ENCODE measurements at regions of chr2 and their contacts with region 1.

Region 1: DNA sequence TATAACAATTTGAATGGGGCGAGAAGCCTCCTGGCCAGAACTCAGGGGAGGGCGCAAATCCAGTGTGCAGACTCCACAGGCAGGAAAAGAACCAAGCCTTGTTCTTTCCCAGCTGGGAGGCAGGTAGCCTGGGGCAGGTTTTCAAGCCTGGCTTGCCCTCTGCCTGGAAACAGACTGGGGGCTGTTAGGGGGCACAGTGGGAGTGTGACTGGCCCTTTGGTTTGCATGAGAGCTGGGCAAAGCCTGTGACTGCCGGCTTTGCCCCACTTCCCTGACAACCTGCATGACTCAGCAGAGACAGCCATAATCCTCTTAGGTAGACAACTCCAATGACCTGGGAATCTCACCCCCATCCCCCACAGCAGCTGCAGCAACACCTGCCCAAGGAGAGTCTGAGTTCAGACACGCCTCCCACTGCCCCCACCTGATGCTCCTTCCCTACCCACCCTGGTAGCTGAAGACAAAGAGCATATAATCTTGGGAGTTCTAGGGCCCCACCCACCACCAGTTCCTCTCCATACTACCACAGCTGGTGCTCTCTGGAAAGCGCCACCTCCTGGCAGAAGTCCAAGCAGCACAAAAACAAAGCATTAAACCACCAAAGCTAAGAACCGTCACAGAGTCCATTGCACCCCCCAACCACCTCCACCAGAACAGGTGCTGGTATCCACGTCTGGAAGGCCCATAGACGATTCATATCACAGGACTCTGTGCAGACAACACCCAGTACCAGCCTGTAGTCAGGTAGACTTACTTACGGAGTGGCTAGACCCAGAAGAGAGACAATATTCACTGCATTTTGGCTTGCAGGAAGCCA is 402.5 kb downstream of the STK39 start:
- DNase-seq: no peak
- ATAC-seq: no peak
- H3K4me3 ChIP-seq: no peak overlapping the region
- H3K27ac ChIP-seq: no peak overlapping the region
- H3K4me1 ChIP-seq: no peaks in the 10 kb centered on the region
- H3K27me3 ChIP-seq: no peaks in the 10 kb centered on the region

Region 2: DNA sequence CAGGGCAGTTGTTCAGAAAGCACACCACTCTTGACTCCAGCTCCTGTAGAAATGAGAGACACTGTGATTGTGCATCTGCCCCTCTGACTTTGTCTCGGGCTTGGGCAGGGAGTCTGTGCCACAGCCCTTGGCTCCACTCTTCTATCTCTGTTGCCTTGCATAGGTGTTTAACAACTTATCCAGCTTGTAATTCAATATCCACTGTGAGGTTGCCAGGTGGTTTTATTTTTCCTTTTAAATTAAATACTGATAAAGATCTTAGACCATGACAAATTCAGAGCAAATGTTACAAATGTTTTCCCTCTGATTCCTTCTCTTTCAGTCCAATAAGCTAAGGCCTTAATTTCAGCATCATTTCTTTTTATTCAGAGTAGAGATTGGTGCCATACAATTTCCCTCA is 19.3 kb before region 1 on chr2:
- intact Hi-C with region 1: loop called in 1 of 4 experiments (anchors 2 kb)
- DNase-seq: no peak
- ATAC-seq: no peak
- H3K4me3 ChIP-seq: no peak overlapping the region
- H3K27ac ChIP-seq: no peak overlapping the region
- H3K4me1 ChIP-seq: no peaks in the 10 kb centered on the region
- H3K27me3 ChIP-seq: no peaks in the 10 kb centered on the region

Measured in right cardiac atrium (tissue), 5 donors.